Brain microvascular endothelial cell (primary cell): ENCODE measurements at regions of chr3 and their contacts with region 1.

Region 1: GRCh38 chr3:45507820-45508317 is 86.7 kb upstream of the LIMD1 start:
- DNase-seq: peak; percentile 78
- H3K4me3 ChIP-seq: no peak overlapping the region
- H3K27ac ChIP-seq: peak overlapping the region; percentile 97
- H3K27me3 ChIP-seq: no peaks in the 10 kb centered on the region
- CTCF ChIP-seq: peak; percentile 83

Region 2: DNA sequence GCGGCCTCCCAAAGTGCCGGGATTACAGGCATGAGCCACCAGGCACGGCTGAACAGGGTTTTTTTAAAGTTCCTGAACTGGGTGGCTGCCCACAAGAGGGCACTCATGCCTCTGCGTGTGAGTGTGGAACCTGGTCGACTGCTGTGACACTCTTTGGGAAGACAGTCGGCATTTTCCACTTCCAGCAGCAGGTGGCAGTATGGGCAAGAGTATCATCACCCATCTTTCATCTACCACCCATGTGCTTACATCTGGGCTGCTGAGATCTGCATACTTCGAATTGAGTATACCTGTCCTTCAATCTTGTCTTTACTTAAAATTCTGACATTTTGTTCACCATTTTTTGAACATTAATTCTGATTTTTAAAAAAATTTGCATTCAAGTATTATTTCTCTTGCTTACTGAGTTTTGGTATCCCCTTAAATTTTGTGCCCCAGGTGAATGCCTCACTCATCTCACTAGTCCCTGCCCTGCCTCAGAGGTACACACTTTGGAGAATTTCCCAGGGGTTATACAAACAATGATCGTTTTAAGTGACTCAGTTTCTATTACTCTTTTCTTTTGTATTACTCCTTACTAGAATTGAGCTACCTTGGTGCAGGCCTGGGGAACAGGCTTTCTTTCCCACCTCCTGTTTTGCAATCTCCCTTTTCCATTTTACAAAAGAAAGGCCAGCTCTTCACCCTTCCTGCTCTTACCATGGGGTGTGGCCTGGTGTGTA is 470.0 kb before region 1 on chr3:
- in situ Hi-C with region 1: loop called (anchors 25 kb)
- DNase-seq: peak; percentile 94
- H3K4me3 ChIP-seq: no peak overlapping the region
- H3K27ac ChIP-seq: no peak overlapping the region
- H3K27me3 ChIP-seq: no peaks in the 10 kb centered on the region
- CTCF ChIP-seq: peak; percentile 95

Region 3: GRCh38 chr3:45659661-45660559 is 152.0 kb after region 1 on chr3:
- in situ Hi-C with region 1: loop called (anchors 10 kb)
- DNase-seq: peak; percentile 81
- H3K4me3 ChIP-seq: no peak overlapping the region
- H3K27ac ChIP-seq: peak overlapping the region; percentile 76
- H3K27me3 ChIP-seq: no peaks in the 10 kb centered on the region
- CTCF ChIP-seq: peak; percentile 99